Mammary epithelial cell (primary cell): ENCODE measurements at regions of chr15 and their contacts with region 1.

Region 1: DNA sequence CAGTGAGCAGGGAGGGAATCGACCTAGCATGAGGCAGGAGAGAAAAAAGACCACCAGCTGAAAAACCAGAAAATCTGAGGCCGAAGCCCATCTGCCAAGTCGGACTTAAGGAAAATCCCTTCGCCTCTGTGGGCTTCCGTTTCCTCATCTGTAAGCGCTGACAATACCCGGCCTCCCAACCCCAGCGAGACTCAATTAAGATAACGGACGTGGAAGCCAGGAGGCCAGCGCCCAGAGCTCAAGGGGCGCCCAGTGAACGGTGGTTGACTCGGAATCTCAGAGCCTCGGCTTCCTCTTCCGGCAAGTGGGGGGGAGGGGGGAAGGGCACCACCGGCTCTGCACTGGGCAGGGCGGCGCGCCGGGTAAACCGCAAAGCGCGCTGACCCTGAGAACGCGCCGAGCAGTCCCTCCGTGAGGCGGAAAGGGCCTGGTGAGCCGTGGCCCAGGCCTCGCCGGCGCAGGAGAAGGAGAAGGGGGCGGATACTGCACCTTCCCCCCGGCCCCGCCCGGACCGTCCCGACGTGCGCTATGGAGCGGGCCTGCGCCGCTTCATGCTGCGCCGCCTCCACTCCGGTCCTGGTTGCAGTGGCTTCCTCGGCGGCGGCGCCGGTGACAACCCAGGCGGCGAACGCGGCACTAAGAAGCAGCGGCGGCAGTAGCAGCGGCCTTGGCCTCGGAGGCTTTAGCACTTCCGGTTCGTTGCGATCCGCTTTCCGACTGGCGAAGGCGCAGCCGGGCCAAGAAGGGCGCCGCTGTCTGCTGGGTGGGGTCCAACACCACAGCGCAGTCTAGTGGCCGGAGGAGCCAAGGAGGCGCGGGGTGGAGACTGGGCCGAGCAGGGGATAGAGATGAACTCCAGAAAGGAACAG is at the start of gene DPP8:
- DNase-seq: peak; percentile 90
- H3K4me3 ChIP-seq: peak within 1 kb of the TSS; percentile 62 to 100 (median 69)
- H3K27ac ChIP-seq: peak within 1 kb of the TSS; percentile 78
- H3K4me1 ChIP-seq: peaks cover 10% of the 10 kb centered on the region
- H3K27me3 ChIP-seq: no peaks in the 10 kb centered on the region
- CTCF ChIP-seq: peak; percentile 96 to 97
- total RNA-seq, gene DPP8: 22.8 to 39.7 TPM

Region 2: DNA sequence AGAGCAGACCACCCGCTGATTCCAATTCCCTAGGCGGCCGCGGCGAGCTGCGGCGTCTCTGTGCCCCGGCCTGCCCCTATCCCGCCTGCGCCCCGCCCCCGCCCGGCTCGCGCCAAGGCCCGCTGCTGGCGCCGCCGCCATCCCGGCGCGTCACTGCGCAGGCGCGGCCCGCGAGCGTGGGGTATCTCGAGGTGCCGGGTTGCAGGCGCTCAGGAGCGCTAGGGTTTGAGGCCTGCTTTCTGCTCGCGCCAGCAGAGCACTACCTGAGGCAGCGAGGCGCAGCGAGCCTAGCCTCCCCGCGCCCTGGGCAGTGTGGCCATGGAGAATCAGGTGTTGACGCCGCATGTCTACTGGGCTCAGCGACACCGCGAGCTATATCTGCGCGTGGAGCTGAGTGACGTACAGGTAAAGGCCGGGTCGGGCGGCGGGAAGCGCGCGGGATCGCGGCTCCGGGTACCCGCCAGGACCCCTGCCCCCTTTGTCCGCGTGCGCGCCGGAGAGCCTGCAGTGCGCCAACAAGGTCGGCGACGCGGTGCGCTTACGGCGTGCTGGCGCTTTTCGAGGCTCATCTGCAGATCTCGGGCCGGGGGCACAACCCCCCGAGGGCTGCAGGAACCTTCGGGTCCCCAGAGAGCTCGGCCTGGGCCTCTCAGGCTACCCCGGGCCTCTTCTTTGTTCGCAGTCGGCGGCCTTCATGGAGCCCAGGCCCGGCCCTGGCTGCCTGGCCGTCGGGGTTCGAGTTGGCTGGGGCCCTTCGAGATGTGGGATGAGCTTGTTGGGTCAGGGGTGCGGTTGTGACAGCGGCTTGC is 13.3 kb after region 1 on chr15 and contains the start of gene HACD3:
- CTCF ChIA-PET with region 1: no interaction called
- dilution Hi-C with region 1: no loop called
- in situ Hi-C with region 1: no loop called
- intact Hi-C with region 1: loop called (anchors 1 kb)
- DNase-seq: peak; percentile 73
- H3K4me3 ChIP-seq: peak within 1 kb of the TSS; percentile 83 to 99 (median 89)
- H3K27ac ChIP-seq: peak within 1 kb of the TSS; percentile 71
- H3K4me1 ChIP-seq: peaks cover 23% of the 10 kb centered on the region
- H3K27me3 ChIP-seq: no peaks in the 10 kb centered on the region
- CTCF ChIP-seq: no peak
- total RNA-seq, gene HACD3: 49.6 to 55.8 TPM